Activated CD4-positive, alpha-beta T cell treated with anti-CD3 and anti-CD28 coated beads, Interleukin-2, amount 10 ng/mL, durations not matched to agents 24 days and 14 days (primary cell): ENCODE measurements at regions of chr7 and their contacts with region 1.

Region 1: GRCh38 chr7:142669074-142669654 is 80.1 kb upstream of the PRSS1 start:
- DNase-seq: peak; percentile 55
- H3K4me3 Mint-ChIP-seq: no peak overlapping the region
- H3K27ac Mint-ChIP-seq: no peak overlapping the region
- H3K4me1 Mint-ChIP-seq: peaks cover 19% of the 10 kb centered on the region
- H3K27me3 Mint-ChIP-seq: peaks cover 3% of the 10 kb centered on the region

Region 2: GRCh38 chr7:142632291-142633134 is 36.7 kb before region 1 on chr7:
- intact Hi-C with region 1: loop called (anchors 5 kb)
- DNase-seq: peak; percentile 86
- H3K4me3 Mint-ChIP-seq: no peak overlapping the region
- H3K27ac Mint-ChIP-seq: no peak overlapping the region
- H3K4me1 Mint-ChIP-seq: peaks cover 13% of the 10 kb centered on the region
- H3K27me3 Mint-ChIP-seq: peaks cover 12% of the 10 kb centered on the region

Region 3: DNA sequence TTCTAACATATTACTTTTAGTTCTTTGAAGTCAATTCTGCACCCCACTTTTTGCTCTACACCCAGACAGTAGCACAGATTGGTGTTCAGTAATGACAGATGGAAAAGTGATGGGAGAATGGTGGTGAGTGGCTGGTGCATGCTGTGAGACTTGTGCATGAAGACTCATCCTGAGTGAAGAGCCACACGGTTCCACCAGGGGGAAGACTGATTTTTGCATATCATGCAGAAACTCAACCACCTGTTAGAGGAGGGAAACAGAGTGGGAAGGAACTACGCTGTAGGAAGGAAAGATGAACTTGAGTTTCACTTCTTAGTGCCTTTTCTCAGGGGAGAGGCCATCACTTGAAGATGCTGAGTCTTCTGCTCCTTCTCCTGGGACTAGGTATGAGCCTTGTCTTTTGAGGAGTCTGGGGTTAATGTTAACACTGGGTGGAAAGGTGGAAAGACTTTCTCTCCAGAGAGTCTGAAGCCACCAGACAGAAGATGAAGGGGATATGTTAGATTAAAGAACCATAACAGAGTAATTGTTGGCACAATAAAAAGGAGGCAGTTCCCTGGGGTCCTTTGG is 70.8 kb after region 1 on chr7:
- intact Hi-C with region 1: no loop called
- DNase-seq: peak; percentile 55
- H3K4me3 Mint-ChIP-seq: peak overlapping the region; percentile 21
- H3K27ac Mint-ChIP-seq: no peak overlapping the region
- H3K4me1 Mint-ChIP-seq: peaks cover 6% of the 10 kb centered on the region
- H3K27me3 Mint-ChIP-seq: no peaks in the 10 kb centered on the region